Posterior cingulate gyrus (tissue), 11 donors: ENCODE measurements at regions of chr1 and their contacts with region 1.

Region 1: DNA sequence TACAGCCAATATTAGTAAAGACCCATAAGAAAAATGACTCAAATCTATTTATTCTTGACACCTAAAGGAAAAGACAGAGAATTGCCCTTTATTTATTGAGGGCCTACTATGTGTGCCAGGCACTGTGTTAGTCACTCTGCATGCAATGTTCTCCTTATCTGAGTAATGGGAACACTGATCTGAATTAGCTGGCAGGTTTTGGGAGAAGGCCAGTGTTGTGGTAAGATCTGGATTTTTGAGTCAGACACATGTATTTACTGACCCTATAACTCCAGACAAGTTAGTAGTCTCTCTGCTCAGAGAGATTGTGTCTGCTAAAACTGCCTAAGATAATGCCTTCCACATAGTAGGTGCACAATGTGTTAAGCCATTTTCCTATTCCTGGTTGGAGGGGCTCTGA is 17.3 kb downstream of the LCE4A start:
- DNase-seq: no peak

Region 2: GRCh38 chr1:152596986-152597385 is 128.3 kb before region 1 on chr1:
- intact Hi-C with region 1: no loop called
- DNase-seq: no peak

Region 3: GRCh38 chr1:152777525-152778137 is 52.4 kb after region 1 on chr1:
- intact Hi-C with region 1: loop called (anchors 5 kb)
- DNase-seq: no peak